ENCODE measurements at regions of chr10 and their contacts with region 1.

Region 1: DNA sequence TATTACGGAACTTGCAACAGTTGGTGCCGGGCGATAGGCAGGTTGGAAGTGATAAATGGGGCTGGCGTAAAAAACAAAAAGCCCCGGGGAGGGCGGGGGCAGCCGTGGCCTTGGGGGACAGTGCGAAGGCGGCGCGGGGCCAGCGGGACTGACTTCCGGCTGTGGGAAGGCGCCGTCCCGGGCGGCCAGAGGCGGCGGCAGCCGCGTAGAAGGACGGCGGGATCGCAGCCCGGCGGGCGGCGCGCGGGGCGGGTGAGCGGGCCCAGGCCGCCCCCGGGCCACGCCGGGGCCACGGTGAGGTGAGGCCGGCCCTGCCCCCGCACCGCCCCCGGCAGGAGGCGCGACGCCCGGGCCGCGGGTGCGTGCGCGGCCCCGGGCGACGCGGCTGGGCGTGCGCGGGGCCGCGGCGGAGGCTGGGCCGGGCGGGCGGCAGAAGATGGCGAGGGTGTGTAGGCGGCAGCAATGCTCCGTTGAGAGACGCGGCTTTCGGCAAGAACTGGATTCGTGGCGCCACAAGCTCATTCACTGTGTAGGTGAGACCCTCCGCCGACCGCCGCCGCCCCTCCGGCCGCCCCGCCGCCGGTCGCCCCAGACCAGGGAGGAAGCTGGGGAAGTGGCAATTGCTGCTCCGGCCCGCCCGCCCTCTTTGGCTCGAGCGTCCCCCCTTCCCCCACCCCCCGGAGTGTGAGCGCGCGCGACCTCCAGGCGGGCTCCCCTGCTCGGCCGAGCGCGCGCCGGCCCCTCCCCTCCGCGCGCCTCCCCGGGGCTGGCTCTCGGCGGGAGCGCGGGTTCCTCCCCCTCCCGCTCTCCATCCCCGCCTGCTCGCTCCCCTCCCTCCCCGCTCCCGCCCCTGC is at the start of gene LCOR:
- DNase-seq: peak; percentile 89 to 93 (median 91)
- ATAC-seq: peak; percentile 83 to 94 (median 91)
- H3K4me3 ChIP-seq: peak within 1 kb of the TSS; percentile 84 to 98 (median 90)
- H3K27ac ChIP-seq: peak within 1 kb of the TSS; percentile 91 to 99 (median 96)
- H3K4me1 ChIP-seq: peaks cover 0 to 53% (median 38%) of the 10 kb centered on the region in 12 donors
- H3K27me3 ChIP-seq: no peaks in the 10 kb centered on the region
- CTCF ChIP-seq: peak in 2 of 12 donors; percentile 23 to 29
- POLR2A ChIP-seq: peak in 1 of 2 donors; percentile 78
- total RNA-seq, gene LCOR: 9.6 to 31.4 (median 21.2) TPM

Region 2: GRCh38 chr10:96586419-96587263 is 245.5 kb before region 1 on chr10 and contains the start of gene TM9SF3:
- intact Hi-C with region 1: loop called in 4 of 10 experiments (anchors 5 to 10 kb)
- DNase-seq: peak; percentile 95 to 97 (median 96)
- ATAC-seq: peak; percentile 84 to 96 (median 94)
- H3K4me3 ChIP-seq: peak within 1 kb of the TSS; percentile 66 to 99 (median 90)
- H3K27ac ChIP-seq: peak within 1 kb of the TSS; percentile 98 to 100 (median 99)
- H3K4me1 ChIP-seq: peaks cover 11 to 62% (median 50%) of the 10 kb centered on the region in 12 donors
- H3K27me3 ChIP-seq: no peaks in the 10 kb centered on the region
- CTCF ChIP-seq: peak in 2 of 12 donors; percentile 6 to 26
- POLR2A ChIP-seq: peak in 1 of 2 donors; percentile 63
- total RNA-seq, gene TM9SF3: 35.1 to 75.6 (median 67.4) TPM

Region 3: GRCh38 chr10:96642973-96643372 is 189.1 kb before region 1 on chr10:
- intact Hi-C with region 1: loop called in 2 of 10 experiments (anchors 5 to 10 kb)
- DNase-seq: peak; percentile 51 to 84 (median 62)
- ATAC-seq: peak in 3 of 4 donors; percentile 54 to 68 (median 59)
- H3K4me3 ChIP-seq: no peak overlapping the region
- H3K27ac ChIP-seq: no peak overlapping the region
- H3K4me1 ChIP-seq: peaks cover 0 to 35% (median 0%) of the 10 kb centered on the region in 12 donors
- H3K27me3 ChIP-seq: no peaks in the 10 kb centered on the region
- CTCF ChIP-seq: peak in 11 of 12 donors; percentile 5 to 62 (median 40)
- POLR2A ChIP-seq: no peak

Region 4: GRCh38 chr10:96765406-96766240 is 66.5 kb before region 1 on chr10:
- intact Hi-C with region 1: loop called in 3 of 10 experiments (anchors 2 to 10 kb)
- DNase-seq: peak; percentile 38 to 83 (median 57)
- ATAC-seq: peak; percentile 37 to 81 (median 72)
- H3K4me3 ChIP-seq: no peak overlapping the region
- H3K27ac ChIP-seq: no peak overlapping the region
- H3K4me1 ChIP-seq: no peaks in the 10 kb centered on the region
- H3K27me3 ChIP-seq: no peaks in the 10 kb centered on the region
- CTCF ChIP-seq: peak; percentile 58 to 81 (median 74)
- POLR2A ChIP-seq: no peak

Region 5: GRCh38 chr10:96910488-96911395 is 78.6 kb after region 1 on chr10:
- intact Hi-C with region 1: loop called in 4 of 10 experiments (anchors 5 to 10 kb)
- DNase-seq: no peak
- ATAC-seq: peak in 3 of 4 donors; percentile 45 to 59 (median 57)
- H3K4me3 ChIP-seq: no peak overlapping the region
- H3K27ac ChIP-seq: no peak overlapping the region
- H3K4me1 ChIP-seq: peaks cover 0 to 34% (median 10%) of the 10 kb centered on the region in 12 donors
- H3K27me3 ChIP-seq: no peaks in the 10 kb centered on the region
- CTCF ChIP-seq: peak; percentile 44 to 75 (median 66)
- POLR2A ChIP-seq: no peak

Region 6: DNA sequence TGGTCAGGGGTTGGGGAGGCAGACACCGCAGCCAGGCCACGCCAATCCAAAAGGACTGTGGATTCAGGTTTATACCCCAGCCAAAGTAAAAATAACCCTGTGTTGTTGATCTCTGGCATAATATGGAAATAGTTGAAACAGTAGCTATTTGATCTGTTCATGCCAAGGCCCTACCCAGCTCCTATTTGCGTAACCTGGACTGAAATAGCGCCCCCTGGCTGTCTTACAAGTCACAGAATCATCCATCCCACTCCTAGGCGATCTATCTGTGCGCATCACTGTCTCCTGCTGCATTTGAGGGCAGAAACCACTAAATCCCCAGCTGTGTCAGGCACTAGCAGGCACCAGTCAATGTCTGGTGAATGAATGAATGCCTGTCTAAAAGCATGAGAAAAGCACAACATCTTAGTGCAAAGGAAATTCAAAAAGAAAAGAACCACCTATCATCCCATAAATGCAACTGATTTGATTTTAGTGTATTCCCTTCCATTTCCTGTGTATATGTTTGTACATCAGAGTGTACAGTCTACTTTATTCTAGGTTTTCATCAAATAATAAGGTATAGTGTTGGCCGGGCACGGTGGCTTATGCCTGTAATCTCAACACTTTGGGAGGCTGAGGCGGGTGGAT is 193.6 kb after region 1 on chr10:
- intact Hi-C with region 1: loop called in 9 of 10 experiments (anchors 5 to 10 kb)
- DNase-seq: peak in 3 of 5 donors; percentile 32 to 49 (median 40)
- ATAC-seq: peak in 3 of 4 donors; percentile 31 to 45 (median 34)
- H3K4me3 ChIP-seq: no peak overlapping the region
- H3K27ac ChIP-seq: peak overlapping the region in 2 of 12 donors; percentile 11 to 67
- H3K4me1 ChIP-seq: peaks cover 0 to 28% (median 15%) of the 10 kb centered on the region in 12 donors
- H3K27me3 ChIP-seq: no peaks in the 10 kb centered on the region
- CTCF ChIP-seq: peak; percentile 50 to 73 (median 67)
- POLR2A ChIP-seq: no peak

Region 7: DNA sequence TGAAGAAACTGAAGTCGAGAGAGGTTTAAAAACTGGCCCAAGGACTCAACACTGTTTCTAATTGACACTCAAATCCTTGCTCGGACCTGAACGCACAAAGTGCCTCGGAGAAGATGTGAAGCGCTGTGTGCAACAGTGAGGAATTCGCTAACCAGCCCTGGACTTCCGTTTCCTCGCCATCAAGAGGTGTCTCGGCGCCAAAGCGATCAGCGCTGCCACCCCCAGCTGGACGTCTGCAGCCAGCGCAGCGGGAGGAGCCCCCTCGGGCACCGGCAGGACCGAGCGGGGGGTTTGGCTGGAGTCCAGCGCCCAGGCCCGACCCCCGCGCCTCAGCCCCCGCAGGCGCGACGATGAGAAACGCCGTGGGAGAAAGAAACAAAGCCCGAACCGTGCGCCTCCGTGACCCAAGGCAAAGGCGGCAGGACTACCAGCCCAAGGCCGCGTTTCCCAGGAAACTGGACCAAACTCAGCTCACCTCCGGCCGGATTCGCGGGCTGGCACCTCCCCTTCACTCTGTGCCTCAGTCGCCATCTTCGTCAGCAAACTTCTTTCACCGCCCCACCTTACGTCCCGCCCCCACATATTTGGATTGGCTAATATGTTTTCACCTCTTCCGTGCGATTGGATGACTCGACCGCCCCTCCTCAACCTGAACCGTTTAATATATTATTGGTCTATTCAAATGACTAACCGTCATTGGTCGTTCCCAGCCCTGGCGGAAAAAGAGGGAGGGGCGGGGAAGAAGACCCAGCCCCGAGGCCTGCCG is 460.2 kb after region 1 on chr10 and contains the start of gene ARHGAP19:
- intact Hi-C with region 1: loop called in 1 of 10 experiments (anchors 5 kb)
- DNase-seq: peak; percentile 94 to 98 (median 97)
- ATAC-seq: peak; percentile 99 to 100 (median 99)
- H3K4me3 ChIP-seq: peak within 1 kb of the TSS; percentile 70 to 100 (median 90)
- H3K27ac ChIP-seq: peak within 1 kb of the TSS; percentile 75 to 98 (median 95)
- H3K4me1 ChIP-seq: peaks cover 0 to 12% (median 8%) of the 10 kb centered on the region in 12 donors
- H3K27me3 ChIP-seq: no peaks in the 10 kb centered on the region
- CTCF ChIP-seq: peak in 3 of 12 donors; percentile 6 to 30 (median 19)
- POLR2A ChIP-seq: peak in 1 of 2 donors; percentile 75
- total RNA-seq, gene ARHGAP19: 3.0 to 7.4 (median 4.1) TPM

Measured in heart left ventricle (tissue), 16 donors.